Activated B cell treated with CpG ODN at 0.5 μM for 24 hours (primary cell): ENCODE measurements at regions of chr17 and their contacts with region 1.

Region 1: DNA sequence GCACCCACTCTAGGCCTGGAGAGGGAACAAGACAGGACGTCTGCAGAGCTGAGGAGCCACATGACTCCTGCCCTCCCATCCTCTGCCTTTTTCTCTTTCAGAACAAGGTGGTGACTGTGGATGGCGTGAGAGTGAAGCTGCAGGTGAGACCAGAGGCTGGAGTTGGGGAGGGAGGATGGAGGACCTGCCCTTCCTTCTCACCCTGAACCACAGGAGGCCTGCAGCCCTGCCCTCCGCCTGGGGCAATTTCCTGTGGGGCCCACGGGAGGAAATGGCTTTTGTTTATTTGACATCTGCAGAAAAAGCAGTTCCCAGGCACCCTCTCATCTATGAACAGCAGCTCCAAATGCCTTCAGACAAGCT is 5.1 kb downstream of the RAB37 start:
- DNase-seq: no peak
- ATAC-seq: peak; percentile 35
- H3K4me3 Mint-ChIP-seq: peak overlapping the region; percentile 42
- H3K27ac Mint-ChIP-seq: peak overlapping the region; percentile 73
- H3K4me1 Mint-ChIP-seq: peaks cover 80% of the 10 kb centered on the region
- H3K27me3 Mint-ChIP-seq: no peaks in the 10 kb centered on the region
- CTCF ChIP-seq: no peak

Region 2: DNA sequence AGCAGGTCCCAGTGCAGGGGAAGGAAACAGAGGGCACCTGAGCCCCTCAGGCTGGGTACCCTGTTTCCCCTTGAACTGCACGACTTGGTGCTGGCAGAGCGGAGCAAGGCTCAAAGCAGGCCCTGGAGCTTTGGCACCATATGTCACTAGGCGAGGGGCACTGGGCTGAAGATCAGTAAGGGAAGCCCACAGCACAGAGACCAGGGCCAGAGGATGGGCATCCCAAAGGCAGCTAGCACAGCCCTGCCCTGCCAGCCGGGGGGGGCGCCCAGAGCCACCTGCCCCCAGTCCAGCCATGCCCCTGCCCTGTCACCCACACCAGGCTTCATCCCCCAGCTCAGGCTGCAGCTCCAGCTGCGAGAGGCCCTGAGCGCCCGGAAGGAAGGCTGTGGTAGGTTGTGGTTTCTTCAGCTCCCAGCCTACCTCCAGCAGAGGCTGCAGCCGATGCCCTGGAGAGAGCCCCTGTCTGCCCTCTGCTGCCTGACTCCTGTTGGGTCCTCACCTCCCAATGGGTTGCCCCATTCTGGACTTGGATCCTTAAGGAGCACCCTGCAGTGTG is 17.2 kb after region 1 on chr17:
- CTCF ChIA-PET with region 1: interaction called, 22 read pairs
- POLR2A ChIA-PET with region 1: interaction called, 10 read pairs
- intact Hi-C with region 1: loop called (anchors 2 kb)
- DNase-seq: no peak
- ATAC-seq: peak; percentile 69
- H3K4me3 Mint-ChIP-seq: peak overlapping the region; percentile 41
- H3K27ac Mint-ChIP-seq: no peak overlapping the region
- H3K4me1 Mint-ChIP-seq: peaks cover 58% of the 10 kb centered on the region
- H3K27me3 Mint-ChIP-seq: no peaks in the 10 kb centered on the region
- CTCF ChIP-seq: no peak

Region 3: GRCh38 chr17:74852237-74853047 is 110.3 kb after region 1 on chr17:
- CTCF ChIA-PET with region 1: no interaction called
- POLR2A ChIA-PET with region 1: no interaction called
- intact Hi-C with region 1: no loop called
- DNase-seq: no peak
- ATAC-seq: peak; percentile 82
- H3K4me3 Mint-ChIP-seq: peak overlapping the region; percentile 46
- H3K27ac Mint-ChIP-seq: no peak overlapping the region
- H3K4me1 Mint-ChIP-seq: peaks cover 7% of the 10 kb centered on the region
- H3K27me3 Mint-ChIP-seq: peaks cover 58% of the 10 kb centered on the region
- CTCF ChIP-seq: no peak